CD4-positive, alpha-beta T cell (primary cell): ENCODE measurements at regions of chr14 and their contacts with region 1.

Region 1: DNA sequence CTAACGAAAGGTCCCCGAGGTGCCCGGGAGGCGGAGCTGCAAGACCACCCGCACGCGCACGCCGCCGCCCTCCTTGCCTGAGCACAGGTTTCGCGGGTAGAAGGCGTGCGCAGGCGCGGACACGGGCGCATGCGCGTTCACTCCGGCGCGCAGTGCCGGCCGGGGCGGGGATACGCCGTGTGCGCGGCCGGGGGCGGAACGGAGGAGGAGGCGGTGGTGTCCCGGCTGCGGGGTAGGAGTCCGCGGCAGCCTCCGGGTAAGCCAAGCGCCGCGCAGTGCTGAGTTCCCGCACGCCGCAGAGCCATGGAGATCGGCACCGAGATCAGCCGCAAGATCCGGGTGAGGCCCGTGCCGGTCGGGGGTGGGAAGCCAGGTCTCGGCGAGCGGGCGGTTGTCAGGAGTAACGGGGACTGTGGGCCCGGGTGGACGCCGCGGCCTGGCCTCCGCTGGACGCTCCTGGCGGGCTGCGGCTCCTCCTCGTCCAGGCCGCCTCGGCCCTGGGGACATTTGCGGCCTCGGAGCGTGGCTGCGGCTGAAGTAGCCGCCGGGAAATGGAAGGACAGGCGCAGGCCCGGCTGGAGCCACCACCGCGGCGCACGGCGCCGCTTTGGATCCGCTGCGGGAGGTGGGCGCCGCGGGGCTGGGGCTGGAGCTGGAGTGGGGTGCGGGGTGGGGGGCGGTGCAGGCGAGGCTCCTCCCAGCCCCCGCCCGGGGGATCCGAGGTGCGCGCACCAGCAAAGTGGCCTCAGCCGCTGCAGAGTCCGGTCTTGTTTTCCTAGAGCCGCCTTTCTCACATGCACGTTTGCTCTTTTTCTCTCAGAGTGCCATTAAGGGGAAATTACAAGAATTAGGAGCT is at the start of gene ZC3H14:
- DNase-seq: peak; percentile 73 to 95 (median 84)
- ATAC-seq: peak; percentile 96
- H3K4me3 ChIP-seq: peak within 1 kb of the TSS; percentile 77
- H3K4me3 Mint-ChIP-seq: peak within 1 kb of the TSS; percentile 97
- H3K27ac ChIP-seq: peak within 1 kb of the TSS in 1 of 2 donors; percentile 35
- H3K27ac Mint-ChIP-seq: peak within 1 kb of the TSS; percentile 67
- H3K4me1 ChIP-seq: peaks cover 13% of the 10 kb centered on the region
- H3K4me1 Mint-ChIP-seq: peaks cover 37% of the 10 kb centered on the region
- H3K27me3 ChIP-seq: no peaks in the 10 kb centered on the region
- H3K27me3 Mint-ChIP-seq: peaks cover 8% of the 10 kb centered on the region
- CTCF ChIP-seq: no peak
- total RNA-seq, gene ZC3H14: 36.5 to 40.2 TPM

Region 2: GRCh38 chr14:88463318-88463717 is 99.7 kb before region 1 on chr14:
- CTCF ChIA-PET with region 1: no interaction called
- POLR2A ChIA-PET with region 1: no interaction called
- intact Hi-C with region 1: no loop called
- DNase-seq: peak in 2 of 14 experiments; percentile 3 to 4
- ATAC-seq: no peak
- H3K4me3 ChIP-seq: no peak overlapping the region
- H3K4me3 Mint-ChIP-seq: no peak overlapping the region
- H3K27ac ChIP-seq: no peak overlapping the region
- H3K27ac Mint-ChIP-seq: no peak overlapping the region
- H3K4me1 ChIP-seq: no peaks in the 10 kb centered on the region
- H3K4me1 Mint-ChIP-seq: no peaks in the 10 kb centered on the region
- H3K27me3 ChIP-seq: no peaks in the 10 kb centered on the region
- H3K27me3 Mint-ChIP-seq: no peaks in the 10 kb centered on the region
- CTCF ChIP-seq: no peak

Region 3: DNA sequence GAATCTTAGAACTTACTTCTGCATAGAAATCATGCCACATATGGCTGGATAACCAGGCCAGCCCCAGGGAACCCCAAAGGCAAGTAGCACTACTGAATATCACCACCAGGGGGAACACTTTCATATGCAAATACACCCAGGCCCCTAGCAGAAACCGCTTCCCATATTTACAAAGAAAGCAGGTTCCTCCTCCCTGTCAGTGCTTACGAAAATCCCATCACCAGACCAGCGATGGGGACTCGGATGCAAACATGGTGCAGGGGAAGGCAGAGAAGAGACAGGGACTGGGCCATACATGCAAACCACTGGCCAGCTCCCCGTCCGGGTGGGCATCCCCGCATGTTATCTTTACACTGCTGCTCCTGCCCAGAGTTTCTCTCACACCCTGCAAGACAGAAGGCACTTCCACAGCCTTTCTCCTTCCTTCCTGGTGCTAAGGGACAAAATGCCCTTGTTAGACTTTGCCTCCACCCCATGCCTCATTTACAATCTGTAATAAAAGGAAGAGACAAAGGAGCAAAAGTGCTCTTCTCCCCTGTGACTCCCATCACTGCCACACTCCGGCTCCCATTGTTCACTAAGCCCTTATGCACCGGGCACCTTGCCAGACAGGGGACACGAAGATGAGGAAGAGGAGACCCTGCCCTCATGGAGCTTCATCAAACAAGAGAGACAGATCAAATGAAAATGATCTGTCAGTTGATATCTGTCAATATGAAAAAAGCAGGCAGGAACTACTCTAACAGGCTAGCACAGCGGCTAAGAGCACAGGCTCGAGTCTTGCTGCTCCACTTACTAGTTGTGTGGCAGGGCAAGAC is 70.6 kb before region 1 on chr14:
- CTCF ChIA-PET with region 1: interaction called, 3 read pairs
- POLR2A ChIA-PET with region 1: no interaction called
- intact Hi-C with region 1: loop called (anchors 1 to 5 kb)
- DNase-seq: peak; percentile 22 to 80 (median 47)
- ATAC-seq: peak; percentile 72
- H3K4me3 ChIP-seq: no peak overlapping the region
- H3K4me3 Mint-ChIP-seq: no peak overlapping the region
- H3K27ac ChIP-seq: no peak overlapping the region
- H3K27ac Mint-ChIP-seq: no peak overlapping the region
- H3K4me1 ChIP-seq: no peaks in the 10 kb centered on the region
- H3K4me1 Mint-ChIP-seq: no peaks in the 10 kb centered on the region
- H3K27me3 ChIP-seq: no peaks in the 10 kb centered on the region
- H3K27me3 Mint-ChIP-seq: peaks cover 5% of the 10 kb centered on the region
- CTCF ChIP-seq: peak; percentile 85

Region 4: GRCh38 chr14:88792572-88793258 is 229.7 kb after region 1 on chr14 and contains the start of gene EML5:
- CTCF ChIA-PET with region 1: no interaction called
- POLR2A ChIA-PET with region 1: no interaction called
- intact Hi-C with region 1: loop called in 1 of 2 experiments (anchors 2 kb)
- DNase-seq: peak; percentile 64 to 93 (median 80)
- ATAC-seq: peak; percentile 87
- H3K4me3 ChIP-seq: peak within 1 kb of the TSS; percentile 89
- H3K4me3 Mint-ChIP-seq: peak within 1 kb of the TSS; percentile 95
- H3K27ac ChIP-seq: peak within 1 kb of the TSS in 1 of 2 donors; percentile 61
- H3K27ac Mint-ChIP-seq: peak within 1 kb of the TSS; percentile 85
- H3K4me1 ChIP-seq: peaks cover 16% of the 10 kb centered on the region
- H3K4me1 Mint-ChIP-seq: peaks cover 20% of the 10 kb centered on the region
- H3K27me3 ChIP-seq: peaks cover 0 to 3% of the 10 kb centered on the region in 2 experiments
- H3K27me3 Mint-ChIP-seq: no peaks in the 10 kb centered on the region
- CTCF ChIP-seq: peak; percentile 24
- total RNA-seq, gene EML5: 2.8 to 3.1 TPM